ENCODE measurements at regions of chr20 and their contacts with region 1.

Region 1: DNA sequence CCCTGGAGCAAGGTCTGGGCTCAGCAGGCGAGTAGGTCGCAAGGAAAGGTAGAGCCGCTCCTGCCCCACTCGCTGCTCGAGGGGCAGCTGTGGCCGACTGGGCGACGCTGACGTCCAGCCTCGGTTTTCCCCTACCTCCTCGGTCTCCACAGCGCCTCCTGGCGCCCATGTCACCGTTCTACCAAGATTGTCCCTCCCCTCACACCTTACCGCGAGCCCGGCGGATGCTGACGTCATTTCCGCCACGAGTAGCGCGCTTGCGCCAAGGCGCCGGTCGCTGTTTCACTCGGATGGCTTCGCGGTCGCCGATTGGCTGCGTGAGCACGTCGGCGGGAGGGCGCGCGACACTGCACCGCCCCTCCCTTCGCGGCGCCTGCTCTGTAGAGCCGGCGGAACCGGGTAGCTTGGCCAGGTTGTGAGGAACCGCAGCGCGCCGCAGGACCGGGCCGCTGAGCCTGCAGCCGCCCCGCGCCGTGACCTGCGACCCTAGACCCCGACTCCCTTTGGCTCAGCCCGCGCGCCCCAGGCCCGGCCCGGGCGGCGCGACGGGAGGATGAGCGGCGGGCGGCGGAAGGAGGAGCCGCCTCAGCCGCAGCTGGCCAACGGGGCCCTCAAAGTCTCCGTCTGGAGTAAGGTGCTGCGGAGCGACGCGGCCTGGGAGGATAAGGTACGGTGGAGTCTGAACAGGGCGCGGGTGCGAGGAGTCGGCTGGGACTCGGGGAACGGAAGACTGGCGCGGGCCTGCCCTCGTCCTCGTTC is at the start of gene RAB5IF:
- DNase-seq: peak; percentile 98 to 99 (median 99)
- ATAC-seq: peak; percentile 94
- H3K4me3 ChIP-seq: peak within 1 kb of the TSS; percentile 89
- H3K4me3 Mint-ChIP-seq: peak within 1 kb of the TSS; percentile 95 to 99 (median 96)
- H3K27ac ChIP-seq: peak within 1 kb of the TSS; percentile 91
- H3K27ac Mint-ChIP-seq: peak within 1 kb of the TSS; percentile 94 to 99 (median 96)
- H3K4me1 ChIP-seq: peaks cover 16 to 20% of the 10 kb centered on the region in 2 donors
- H3K4me1 Mint-ChIP-seq: peaks cover 12 to 38% (median 28%) of the 10 kb centered on the region in 7 donors
- H3K27me3 ChIP-seq: no peaks in the 10 kb centered on the region
- H3K27me3 Mint-ChIP-seq: peaks cover 0 to 3% (median 0%) of the 10 kb centered on the region in 5 donors
- total RNA-seq, gene RAB5IF: 47.9 to 100 (median 53.1) TPM

Region 2: DNA sequence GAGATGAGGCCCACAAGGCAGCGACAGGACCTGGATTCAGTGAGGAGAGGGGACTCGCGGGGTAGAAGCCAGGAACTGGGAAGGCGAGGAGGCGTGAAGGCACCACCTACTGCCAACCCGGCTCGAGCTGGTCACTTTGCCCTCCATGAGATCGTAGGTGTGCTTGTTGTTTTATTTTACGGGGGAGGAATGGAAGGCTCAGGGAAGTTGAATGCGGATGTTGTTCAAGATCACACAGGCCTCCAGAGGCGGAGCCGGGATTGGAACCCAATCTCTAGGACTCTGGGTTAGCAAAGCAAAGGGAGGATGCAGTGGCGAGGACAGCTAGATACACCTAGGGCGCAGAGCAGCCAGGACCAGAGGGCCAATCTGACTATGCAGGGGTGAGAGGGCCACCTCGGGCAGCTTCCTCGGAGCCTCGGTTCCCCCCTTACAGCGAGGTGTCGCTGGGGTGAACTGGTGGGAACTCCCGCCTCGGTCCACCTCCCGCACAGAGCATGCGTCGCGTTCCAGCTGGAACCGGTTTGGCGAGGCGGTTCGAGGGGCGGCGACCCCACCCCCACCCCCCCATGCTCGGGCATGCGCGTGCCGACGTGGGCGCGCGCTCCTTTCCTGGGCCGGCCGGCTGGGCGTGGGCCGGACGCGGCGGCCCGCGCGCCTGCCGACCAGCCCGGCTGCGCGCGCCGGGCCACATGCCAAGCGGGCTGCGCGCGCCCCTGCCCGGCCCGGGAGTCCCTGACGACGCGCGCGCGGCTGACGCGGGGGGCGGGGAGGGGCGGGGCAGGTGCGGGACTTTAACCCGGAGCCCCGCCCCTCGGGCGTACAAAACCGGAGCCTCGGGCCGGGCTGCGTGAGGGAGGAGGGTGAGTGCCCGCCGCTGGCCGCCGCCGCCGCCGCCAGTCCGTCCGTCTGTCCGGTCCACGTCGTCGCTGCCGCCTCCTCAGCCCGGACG is 144.7 kb before region 1 on chr20:
- CTCF ChIA-PET with region 1: no interaction called
- POLR2A ChIA-PET with region 1: interaction called, 6 read pairs
- intact Hi-C with region 1: loop called (anchors 1 to 2 kb)
- DNase-seq: peak; percentile 76 to 89 (median 86)
- ATAC-seq: peak; percentile 93
- H3K4me3 ChIP-seq: peak overlapping the region; percentile 73
- H3K4me3 Mint-ChIP-seq: peak overlapping the region; percentile 74 to 97 (median 83)
- H3K27ac ChIP-seq: peak overlapping the region; percentile 85
- H3K27ac Mint-ChIP-seq: peak overlapping the region; percentile 88 to 97 (median 95)
- H3K4me1 ChIP-seq: peaks cover 38 to 39% of the 10 kb centered on the region in 2 donors
- H3K4me1 Mint-ChIP-seq: peaks cover 34 to 51% (median 45%) of the 10 kb centered on the region in 7 donors
- H3K27me3 ChIP-seq: no peaks in the 10 kb centered on the region
- H3K27me3 Mint-ChIP-seq: peaks cover 0 to 6% (median 0%) of the 10 kb centered on the region in 5 donors

Region 3: GRCh38 chr20:36573103-36573794 is 32.3 kb before region 1 on chr20 and contains the start of gene TGIF2:
- CTCF ChIA-PET with region 1: interaction called, 24 read pairs
- POLR2A ChIA-PET with region 1: interaction called, 123 read pairs
- intact Hi-C with region 1: loop called (anchors 1 kb)
- DNase-seq: peak; percentile 86 to 93 (median 91)
- ATAC-seq: peak; percentile 84
- H3K4me3 ChIP-seq: peak within 1 kb of the TSS; percentile 70
- H3K4me3 Mint-ChIP-seq: peak within 1 kb of the TSS; percentile 88 to 97 (median 92)
- H3K27ac ChIP-seq: peak within 1 kb of the TSS; percentile 100
- H3K27ac Mint-ChIP-seq: peak within 1 kb of the TSS; percentile 96 to 100 (median 99)
- H3K4me1 ChIP-seq: peaks cover 13 to 34% of the 10 kb centered on the region in 2 donors
- H3K4me1 Mint-ChIP-seq: peaks cover 27 to 49% (median 40%) of the 10 kb centered on the region in 7 donors
- H3K27me3 ChIP-seq: no peaks in the 10 kb centered on the region
- H3K27me3 Mint-ChIP-seq: no peaks in the 10 kb centered on the region
- total RNA-seq, gene TGIF2: 35.6 to 44.3 (median 40.7) TPM

Region 4: GRCh38 chr20:36629719-36630681 is 24.4 kb after region 1 on chr20:
- CTCF ChIA-PET with region 1: no interaction called
- POLR2A ChIA-PET with region 1: interaction called, 15 read pairs
- intact Hi-C with region 1: no loop called
- DNase-seq: peak in 8 of 9 donors; percentile 28 to 48 (median 46)
- ATAC-seq: peak; percentile 88
- H3K4me3 ChIP-seq: peak overlapping the region; percentile 1
- H3K4me3 Mint-ChIP-seq: peak overlapping the region; percentile 79 to 89 (median 82)
- H3K27ac ChIP-seq: peak overlapping the region; percentile 64
- H3K27ac Mint-ChIP-seq: peak overlapping the region; percentile 91 to 98 (median 95)
- H3K4me1 ChIP-seq: peaks cover 23 to 33% of the 10 kb centered on the region in 2 donors
- H3K4me1 Mint-ChIP-seq: peaks cover 20 to 55% (median 47%) of the 10 kb centered on the region in 7 donors
- H3K27me3 ChIP-seq: no peaks in the 10 kb centered on the region
- H3K27me3 Mint-ChIP-seq: no peaks in the 10 kb centered on the region

Region 5: GRCh38 chr20:36773597-36774390 is 168.2 kb after region 1 on chr20 and contains the start of gene DSN1:
- CTCF ChIA-PET with region 1: interaction called, 6 read pairs
- POLR2A ChIA-PET with region 1: no interaction called
- intact Hi-C with region 1: loop called in 1 of 2 experiments (anchors 1 kb)
- DNase-seq: peak; percentile 94 to 100 (median 97)
- ATAC-seq: peak; percentile 90
- H3K4me3 ChIP-seq: peak within 1 kb of the TSS; percentile 96
- H3K4me3 Mint-ChIP-seq: peak within 1 kb of the TSS; percentile 83 to 98 (median 95)
- H3K27ac ChIP-seq: peak within 1 kb of the TSS; percentile 93
- H3K27ac Mint-ChIP-seq: peak within 1 kb of the TSS; percentile 90 to 100 (median 97)
- H3K4me1 ChIP-seq: peaks cover 8 to 13% of the 10 kb centered on the region in 2 donors
- H3K4me1 Mint-ChIP-seq: peaks cover 8 to 36% (median 27%) of the 10 kb centered on the region in 7 donors
- H3K27me3 ChIP-seq: no peaks in the 10 kb centered on the region
- H3K27me3 Mint-ChIP-seq: peaks cover 0 to 2% (median 0%) of the 10 kb centered on the region in 5 donors
- total RNA-seq, gene DSN1: 9.2 to 27.5 (median 13.4) TPM